ENCODE measurements at regions of chr12 and their contacts with region 1.

Region 1: DNA sequence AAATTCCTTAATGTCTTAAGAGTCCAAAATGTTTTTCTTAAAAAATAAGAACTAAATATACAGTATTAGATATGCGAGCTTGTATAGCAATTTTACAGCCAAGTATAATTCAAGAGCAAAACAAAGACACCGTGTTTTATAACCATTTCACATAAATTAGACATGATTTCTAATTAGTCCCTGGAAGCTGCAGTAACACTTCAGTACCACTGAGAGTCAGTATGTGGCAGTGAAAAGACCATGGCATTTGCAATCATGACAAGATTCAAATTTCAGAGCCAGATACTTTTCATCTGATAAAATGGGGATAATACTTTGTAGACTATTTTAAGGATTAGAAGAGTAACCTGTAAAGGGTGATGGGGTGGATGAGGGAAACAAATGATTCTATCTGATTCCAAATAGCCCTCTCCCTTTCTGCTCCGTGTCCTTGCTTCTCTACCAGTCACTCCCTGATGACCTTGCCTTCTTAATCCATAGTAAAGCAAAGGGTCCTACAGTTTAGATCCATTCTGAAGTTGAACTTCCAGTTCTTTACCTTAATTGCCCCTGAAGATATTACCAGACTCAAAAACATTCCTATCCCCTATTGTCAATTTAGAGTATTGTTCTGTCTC is 145.4 kb upstream of the ABCD2 start:
- DNase-seq: no peak
- ATAC-seq: peak; percentile 73
- H3K4me3 ChIP-seq: no peak overlapping the region
- H3K4me1 ChIP-seq: no peaks in the 10 kb centered on the region
- CTCF ChIP-seq: peak; percentile 51

Region 2: DNA sequence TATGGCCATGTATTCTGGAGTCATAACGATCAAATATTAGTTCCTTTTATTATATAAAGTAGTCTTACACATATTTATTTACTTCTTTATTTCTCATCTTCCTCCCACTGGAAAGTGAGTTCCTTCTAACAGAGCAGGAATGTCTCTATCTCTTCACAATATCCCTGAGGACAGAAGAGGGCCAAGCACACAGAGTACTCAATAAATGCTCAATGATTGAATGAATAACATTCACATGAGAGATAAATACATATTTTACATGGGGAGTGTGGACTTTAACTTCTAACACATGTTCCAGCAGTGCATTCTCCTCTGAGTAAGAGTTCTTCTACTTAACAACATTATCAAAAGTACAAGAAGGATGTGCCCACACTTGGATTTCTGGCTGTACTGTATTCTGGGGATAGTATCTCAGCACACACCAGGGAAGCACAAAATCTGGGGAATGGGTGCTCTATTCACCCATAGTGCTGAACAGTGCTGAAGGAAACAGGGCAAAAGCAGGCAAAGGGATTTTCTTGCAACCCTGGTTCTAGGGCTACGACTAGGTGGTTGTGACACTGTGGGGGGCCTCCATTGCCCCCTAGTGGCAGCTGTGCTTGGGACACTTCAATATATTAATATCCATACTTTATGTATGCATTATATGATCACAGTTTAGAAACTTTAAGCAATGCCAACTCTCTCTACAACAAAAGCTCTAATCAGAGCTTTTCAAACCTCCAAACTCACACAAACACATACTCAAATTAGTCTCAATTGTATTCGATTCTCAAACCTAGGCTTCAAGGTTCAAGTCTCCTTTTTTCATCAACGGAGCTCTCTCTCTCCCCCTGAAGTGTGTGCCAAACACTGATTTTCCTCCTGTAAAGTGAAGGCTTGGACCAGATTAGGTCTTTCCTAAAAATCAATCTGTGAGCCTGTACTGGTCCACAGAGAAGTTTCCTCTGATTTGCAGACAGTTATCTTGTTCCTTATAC is 225.4 kb after region 1 on chr12:
- intact Hi-C with region 1: loop called in 1 of 2 experiments (anchors 5 kb)
- DNase-seq: peak in 2 of 3 donors; percentile 62 to 90
- ATAC-seq: peak; percentile 90
- H3K4me3 ChIP-seq: no peak overlapping the region
- H3K4me1 ChIP-seq: no peaks in the 10 kb centered on the region
- CTCF ChIP-seq: peak; percentile 64

Region 3: DNA sequence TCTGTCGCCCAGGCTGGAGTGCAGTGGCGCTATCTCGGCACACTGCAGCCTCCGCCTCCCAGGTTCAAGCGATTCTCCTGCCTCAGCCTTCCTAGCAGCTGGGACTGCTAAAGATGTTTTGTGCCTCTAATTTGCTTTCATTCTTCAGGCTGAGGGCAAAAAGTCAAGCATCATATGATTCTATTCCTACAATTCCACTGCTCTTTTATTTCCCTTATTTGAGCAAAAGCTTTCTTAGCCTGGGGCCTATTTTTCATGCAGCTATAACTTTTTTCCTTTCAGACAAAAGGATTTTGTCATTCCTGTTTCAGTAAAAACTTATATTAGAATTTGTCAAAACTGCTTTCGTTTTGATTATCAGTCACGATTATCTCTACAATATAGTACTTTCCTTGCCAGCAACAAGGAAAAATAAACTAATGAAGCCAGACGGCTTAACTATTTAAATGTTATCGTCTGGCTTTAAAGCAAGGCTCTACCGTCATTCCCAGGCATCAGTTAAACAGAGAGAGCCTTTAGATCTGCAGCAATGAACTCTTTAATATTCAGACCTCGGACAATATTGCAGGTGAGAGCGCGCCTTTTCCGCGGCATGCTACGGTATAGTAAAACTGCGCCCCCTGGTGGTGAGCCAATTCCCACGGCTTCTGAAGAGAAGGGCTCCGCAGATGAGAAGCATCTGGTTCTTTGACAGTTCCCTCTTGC is 342.2 kb after region 1 on chr12:
- intact Hi-C with region 1: loop called in 1 of 2 experiments (anchors 10 kb)
- DNase-seq: peak; percentile 87 to 98 (median 90)
- ATAC-seq: peak; percentile 60
- H3K4me3 ChIP-seq: no peak overlapping the region
- H3K4me1 ChIP-seq: peaks cover 22% of the 10 kb centered on the region
- CTCF ChIP-seq: peak; percentile 64

Measured in mucosa of descending colon (tissue), 3 donors.